Dendritic cell treated with granulocyte-macrophage colony-stimulating factor and Interleukin-4, amounts not matched to agents 40 ng/mL and 50 ng/mL, for 4 days (primary cell): ENCODE measurements at regions of chr19 and their contacts with region 1.

Region 1: DNA sequence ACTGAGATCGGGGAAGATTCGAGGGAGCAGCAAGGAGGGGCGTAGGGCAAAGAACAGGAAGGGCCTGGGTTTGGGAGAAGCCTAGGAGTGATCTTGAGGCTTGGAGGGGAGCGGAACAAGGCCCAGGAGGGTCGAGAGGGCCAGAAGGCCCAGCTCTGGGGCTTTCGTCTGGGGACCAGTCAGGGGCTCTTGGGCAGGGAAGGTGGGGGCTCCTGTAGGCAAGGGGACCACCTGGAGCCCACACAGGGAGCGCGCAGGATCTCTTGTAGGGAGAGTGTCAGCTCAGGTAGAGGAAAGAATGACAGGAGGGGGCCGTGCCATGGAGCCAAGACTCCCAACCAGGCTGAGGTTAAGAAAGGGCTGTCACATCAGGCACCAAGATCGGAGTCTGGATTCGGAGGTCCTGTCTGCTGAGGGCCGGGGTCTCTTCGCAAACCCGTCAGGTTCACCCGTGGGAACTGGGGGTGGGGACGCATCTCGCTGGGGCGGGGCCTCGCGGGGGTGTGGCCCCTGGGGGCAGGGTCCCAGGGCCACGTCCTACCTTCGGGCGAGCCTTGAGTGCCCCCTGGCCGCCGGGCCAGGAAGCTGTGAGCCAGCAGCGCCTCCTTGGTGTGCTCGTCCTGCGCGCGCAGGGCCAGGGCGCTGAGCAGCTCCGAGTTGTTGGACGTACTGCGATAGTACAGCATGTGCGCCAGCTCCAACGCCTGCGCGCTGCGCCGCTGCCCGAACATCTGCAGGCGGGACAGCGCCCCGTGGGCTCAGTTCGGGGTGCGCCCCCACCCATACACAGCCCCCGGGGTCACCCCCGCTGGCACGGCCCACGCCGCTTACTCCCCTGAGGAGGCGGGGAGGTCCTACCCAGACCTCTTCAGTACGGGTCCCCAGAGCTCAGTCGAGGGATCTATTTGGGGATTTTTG is 8.4 kb downstream of the EMP3 start:
- H3K4me3 Mint-ChIP-seq: peak overlapping the region; percentile 87
- H3K27ac Mint-ChIP-seq: peak overlapping the region; percentile 93
- H3K4me1 Mint-ChIP-seq: peaks cover 57% of the 10 kb centered on the region
- H3K27me3 Mint-ChIP-seq: peaks cover 2% of the 10 kb centered on the region

Region 2: GRCh38 chr19:48321622-48322591 is 11.8 kb before region 1 on chr19:
- intact Hi-C with region 1: loop called (anchors 1 kb)
- H3K4me3 Mint-ChIP-seq: peak overlapping the region; percentile 86
- H3K27ac Mint-ChIP-seq: peak overlapping the region; percentile 94
- H3K4me1 Mint-ChIP-seq: peaks cover 61% of the 10 kb centered on the region
- H3K27me3 Mint-ChIP-seq: peaks cover 4% of the 10 kb centered on the region

Region 3: GRCh38 chr19:48354332-48354992 is 20.7 kb after region 1 on chr19:
- intact Hi-C with region 1: no loop called
- H3K4me3 Mint-ChIP-seq: no peak overlapping the region
- H3K27ac Mint-ChIP-seq: no peak overlapping the region
- H3K4me1 Mint-ChIP-seq: peaks cover 8% of the 10 kb centered on the region
- H3K27me3 Mint-ChIP-seq: no peaks in the 10 kb centered on the region